GM12878 (cell line): ENCODE measurements at regions of chr14 and their contacts with region 1.

Region 1: GRCh38 chr14:37985826-37986470 is 221.8 kb upstream of the SSTR1 start:
- DNase-seq: no peak
- ATAC-seq: no peak
- H3K4me3 ChIP-seq: no peak overlapping the region
- H3K27ac ChIP-seq: no peak overlapping the region
- H3K4me1 ChIP-seq: no peaks in the 10 kb centered on the region
- H3K27me3 ChIP-seq: no peaks in the 10 kb centered on the region
- CTCF ChIP-seq: peak; percentile 50 to 56 (median 55)
- EP300 ChIP-seq: no peak
- POLR2A ChIP-seq: no peak
- RAD21 ChIP-seq: peak; percentile 18; the same call in 1 of the 2 replicates

Region 2: GRCh38 chr14:38171197-38171596 is 185.2 kb after region 1 on chr14:
- CTCF ChIA-PET with region 1: no interaction called
- POLR2A ChIA-PET with region 1: no interaction called
- RAD21 ChIA-PET with region 1: no interaction called
- SMC1A ChIA-PET with region 1: no interaction called
- in situ Hi-C with region 1: no loop called
- intact Hi-C with region 1: loop called (anchors 10 kb)
- DNase-seq: no peak
- ATAC-seq: no peak
- H3K4me3 ChIP-seq: no peak overlapping the region
- H3K27ac ChIP-seq: no peak overlapping the region
- H3K4me1 ChIP-seq: no peaks in the 10 kb centered on the region
- H3K27me3 ChIP-seq: no peaks in the 10 kb centered on the region
- CTCF ChIP-seq: no peak
- EP300 ChIP-seq: no peak
- POLR2A ChIP-seq: no peak
- RAD21 ChIP-seq: no peak